Tibial artery (tissue), 4 donors: ENCODE measurements at regions of chrX and their contacts with region 1.

Region 1: GRCh38 chrX:18674788-18675735 is 3.2 kb upstream of the RS1 start:
- DNase-seq: peak; percentile 59 to 83
- H3K4me3 ChIP-seq: peak overlapping the region; percentile 75 to 78
- H3K27ac ChIP-seq: peak overlapping the region; percentile 91 to 94
- H3K4me1 ChIP-seq: peaks cover 0 to 6% (median 0%) of the 10 kb centered on the region in 4 donors
- H3K27me3 ChIP-seq: no peaks in the 10 kb centered on the region
- CTCF ChIP-seq: no peak

Region 2: GRCh38 chrX:18425199-18426003 is 249.7 kb before region 1 on chrX and contains the start of gene CDKL5:
- intact Hi-C with region 1: loop called (anchors 10 kb)
- DNase-seq: peak; percentile 97 to 98
- H3K4me3 ChIP-seq: peak within 1 kb of the TSS; percentile 92 to 93
- H3K27ac ChIP-seq: peak within 1 kb of the TSS; percentile 83
- H3K4me1 ChIP-seq: peaks cover 0 to 22% (median 3%) of the 10 kb centered on the region in 4 donors
- H3K27me3 ChIP-seq: no peaks in the 10 kb centered on the region
- CTCF ChIP-seq: no peak

Region 3: GRCh38 chrX:18886344-18887161 is 211.5 kb after region 1 on chrX:
- intact Hi-C with region 1: loop called (anchors 5 kb)
- DNase-seq: peak; percentile 85 to 91
- H3K4me3 ChIP-seq: peak overlapping the region; percentile 40 to 46
- H3K27ac ChIP-seq: peak overlapping the region; percentile 85 to 89
- H3K4me1 ChIP-seq: peaks cover 4 to 47% (median 15%) of the 10 kb centered on the region in 4 donors
- H3K27me3 ChIP-seq: no peaks in the 10 kb centered on the region
- CTCF ChIP-seq: peak; percentile 60 to 66